Esophagus squamous epithelium (tissue), 5 donors: ENCODE measurements at regions of chr9 and their contacts with region 1.

Region 1: GRCh38 chr9:109316207-109316640 is 4.6 kb downstream of the EPB41L4B start:
- DNase-seq: no peak
- H3K4me3 ChIP-seq: no peak overlapping the region
- H3K27ac ChIP-seq: peak overlapping the region in 1 of 4 donors; percentile 34
- H3K4me1 ChIP-seq: peaks cover 27 to 54% (median 28%) of the 10 kb centered on the region in 3 donors
- H3K27me3 ChIP-seq: peaks cover 0 to 94% (median 4%) of the 10 kb centered on the region in 4 donors
- CTCF ChIP-seq: peak in 1 of 6 experiments; percentile 13
- POLR2A ChIP-seq: no peak

Region 2: GRCh38 chr9:109251080-109251775 is 65.0 kb before region 1 on chr9:
- intact Hi-C with region 1: loop called (anchors 10 kb)
- DNase-seq: no peak
- H3K4me3 ChIP-seq: no peak overlapping the region
- H3K27ac ChIP-seq: no peak overlapping the region
- H3K4me1 ChIP-seq: peaks cover 0 to 7% (median 4%) of the 10 kb centered on the region in 3 donors
- H3K27me3 ChIP-seq: peaks cover 0 to 3% (median 0%) of the 10 kb centered on the region in 4 donors
- CTCF ChIP-seq: no peak
- POLR2A ChIP-seq: no peak

Region 3: GRCh38 chr9:109401168-109401989 is 85.2 kb after region 1 on chr9:
- intact Hi-C with region 1: no loop called
- DNase-seq: no peak
- H3K4me3 ChIP-seq: no peak overlapping the region
- H3K27ac ChIP-seq: no peak overlapping the region
- H3K4me1 ChIP-seq: no peaks in the 10 kb centered on the region
- H3K27me3 ChIP-seq: no peaks in the 10 kb centered on the region
- CTCF ChIP-seq: peak in 5 of 6 experiments; percentile 48 to 72 (median 56)
- POLR2A ChIP-seq: no peak